ENCODE measurements at regions of chr10 and their contacts with region 1.

Region 1: DNA sequence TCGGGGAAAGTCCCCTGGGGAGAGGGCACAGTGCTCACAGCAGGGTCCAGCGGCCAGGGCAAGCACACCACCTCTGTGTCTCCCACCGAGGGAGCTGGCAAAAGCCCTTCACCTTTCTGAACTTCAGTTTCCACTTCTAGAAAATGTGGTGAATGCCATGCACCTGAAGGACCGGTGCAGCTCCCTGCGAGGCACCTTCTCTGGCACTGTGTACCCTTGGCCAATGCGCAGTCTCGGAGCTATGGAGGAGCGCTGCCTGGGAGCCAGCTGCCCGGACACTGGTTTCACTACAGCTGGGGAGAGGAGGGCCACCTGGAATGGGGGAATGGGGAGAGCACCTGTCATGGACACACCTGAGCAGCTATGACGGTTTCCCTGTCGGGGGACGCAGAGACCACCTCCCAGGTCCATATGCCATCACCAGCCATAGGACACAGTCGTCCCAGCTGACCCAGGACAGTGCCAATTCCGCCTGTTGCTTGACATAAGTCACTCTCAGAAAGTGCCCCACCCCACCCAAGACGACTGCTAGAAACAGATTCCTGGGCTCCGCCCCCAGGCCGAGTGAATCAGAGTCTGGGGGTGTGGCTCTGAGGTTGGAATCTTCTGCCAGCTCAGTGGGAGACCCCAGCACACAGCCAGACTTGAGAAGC is 16.8 kb downstream of the RASGEF1A start:
- DNase-seq: peak; percentile 31
- H3K4me3 Mint-ChIP-seq: no peak overlapping the region
- H3K27ac Mint-ChIP-seq: no peak overlapping the region
- H3K4me1 Mint-ChIP-seq: peaks cover 6% of the 10 kb centered on the region
- H3K27me3 Mint-ChIP-seq: no peaks in the 10 kb centered on the region
- CTCF ChIP-seq: no peak

Region 2: DNA sequence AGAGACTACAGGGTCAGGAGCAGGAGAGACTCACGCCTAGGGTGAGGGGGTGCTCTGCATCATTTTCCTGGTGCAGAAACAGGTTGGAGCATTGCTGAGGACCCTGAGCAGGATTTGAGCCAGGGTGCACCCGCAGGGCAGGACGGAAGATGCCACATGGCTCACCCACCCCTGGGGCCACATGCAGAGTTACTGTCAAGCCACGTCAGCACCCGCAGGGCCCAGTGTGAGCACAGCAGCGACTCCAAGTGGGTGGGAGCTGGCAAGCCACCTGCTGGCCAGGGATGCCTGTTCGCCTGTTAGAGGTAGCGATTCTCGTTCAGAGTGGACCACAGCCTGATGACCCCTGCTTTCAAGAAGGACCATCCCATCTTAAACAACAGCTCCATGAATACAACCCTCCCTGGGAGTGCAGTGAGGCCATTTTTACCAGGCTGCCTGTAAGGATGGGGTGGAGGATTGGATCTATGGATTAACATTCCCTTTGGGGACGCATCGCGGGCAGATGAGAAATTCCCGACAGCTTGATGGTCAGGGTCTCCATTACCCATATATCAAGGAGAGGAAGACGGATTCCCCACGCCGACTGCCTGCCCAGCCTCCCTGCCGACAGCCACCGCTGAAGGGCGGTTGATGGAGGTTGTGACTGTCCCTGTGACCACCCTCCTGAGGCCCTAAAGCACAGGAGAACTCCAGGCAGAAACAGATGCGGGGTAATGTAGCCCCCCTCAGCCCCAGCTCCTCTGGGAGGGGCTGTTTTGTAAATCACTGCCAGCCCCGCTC is 274.3 kb before region 1 on chr10:
- CTCF ChIA-PET with region 1: no interaction called
- POLR2A ChIA-PET with region 1: no interaction called
- intact Hi-C with region 1: loop called (anchors 5 kb)
- DNase-seq: peak; percentile 4
- H3K4me3 Mint-ChIP-seq: no peak overlapping the region
- H3K27ac Mint-ChIP-seq: no peak overlapping the region
- H3K4me1 Mint-ChIP-seq: no peaks in the 10 kb centered on the region
- H3K27me3 Mint-ChIP-seq: no peaks in the 10 kb centered on the region
- CTCF ChIP-seq: no peak